MCF 10A (cell line): ENCODE measurements at regions of chr19 and their contacts with region 1.

Region 1: GRCh38 chr19:51784922-51785690 is 9.9 kb upstream of the FPR3 start:
- DNase-seq: peak; percentile 90
- H3K4me3 Mint-ChIP-seq: no peak overlapping the region
- H3K27ac Mint-ChIP-seq: no peak overlapping the region
- H3K4me1 Mint-ChIP-seq: peaks cover 5% of the 10 kb centered on the region
- H3K27me3 Mint-ChIP-seq: no peaks in the 10 kb centered on the region
- CTCF ChIP-seq: no peak

Region 2: GRCh38 chr19:51338563-51339312 is 446.4 kb before region 1 on chr19:
- CTCF ChIA-PET with region 1: interaction called, 3 read pairs
- POLR2A ChIA-PET with region 1: no interaction called
- intact Hi-C with region 1: loop called (anchors 1 kb)
- DNase-seq: peak; percentile 83
- H3K4me3 Mint-ChIP-seq: peak overlapping the region; percentile 76
- H3K27ac Mint-ChIP-seq: peak overlapping the region; percentile 33
- H3K4me1 Mint-ChIP-seq: peaks cover 11% of the 10 kb centered on the region
- H3K27me3 Mint-ChIP-seq: no peaks in the 10 kb centered on the region
- CTCF ChIP-seq: peak; percentile 86

Region 3: DNA sequence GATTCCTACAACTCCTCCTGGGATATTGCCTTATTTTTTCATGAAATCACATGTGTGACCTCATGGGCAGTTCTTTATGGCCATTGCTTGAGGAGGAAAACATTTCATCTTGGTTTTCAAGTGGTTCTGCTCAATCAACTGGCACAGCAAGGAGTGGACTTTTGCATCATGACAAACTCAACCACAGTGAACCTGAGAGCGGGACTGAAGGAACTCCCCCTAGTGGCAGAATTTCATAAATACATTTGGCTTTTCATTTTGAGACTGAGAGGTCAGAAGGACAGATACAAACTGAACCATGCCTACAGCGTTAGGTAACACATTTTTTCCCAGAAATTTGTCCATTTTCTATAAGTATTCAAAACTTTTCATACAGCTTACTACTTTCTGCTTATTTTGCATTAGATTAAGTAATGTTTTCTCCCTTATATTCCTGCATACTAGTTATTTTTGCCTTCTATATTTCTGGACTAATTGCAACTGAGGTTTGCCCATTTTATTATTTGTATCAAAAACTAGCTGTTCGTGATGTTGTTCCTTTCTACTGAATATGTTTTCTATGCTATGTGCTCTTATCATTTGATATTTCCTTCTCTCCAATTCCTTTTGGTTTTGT is 270.1 kb before region 1 on chr19:
- CTCF ChIA-PET with region 1: no interaction called
- POLR2A ChIA-PET with region 1: no interaction called
- intact Hi-C with region 1: loop called (anchors 5 kb)
- DNase-seq: peak; percentile 56
- H3K4me3 Mint-ChIP-seq: no peak overlapping the region
- H3K27ac Mint-ChIP-seq: no peak overlapping the region
- H3K4me1 Mint-ChIP-seq: no peaks in the 10 kb centered on the region
- H3K27me3 Mint-ChIP-seq: no peaks in the 10 kb centered on the region
- CTCF ChIP-seq: peak; percentile 70

Region 4: DNA sequence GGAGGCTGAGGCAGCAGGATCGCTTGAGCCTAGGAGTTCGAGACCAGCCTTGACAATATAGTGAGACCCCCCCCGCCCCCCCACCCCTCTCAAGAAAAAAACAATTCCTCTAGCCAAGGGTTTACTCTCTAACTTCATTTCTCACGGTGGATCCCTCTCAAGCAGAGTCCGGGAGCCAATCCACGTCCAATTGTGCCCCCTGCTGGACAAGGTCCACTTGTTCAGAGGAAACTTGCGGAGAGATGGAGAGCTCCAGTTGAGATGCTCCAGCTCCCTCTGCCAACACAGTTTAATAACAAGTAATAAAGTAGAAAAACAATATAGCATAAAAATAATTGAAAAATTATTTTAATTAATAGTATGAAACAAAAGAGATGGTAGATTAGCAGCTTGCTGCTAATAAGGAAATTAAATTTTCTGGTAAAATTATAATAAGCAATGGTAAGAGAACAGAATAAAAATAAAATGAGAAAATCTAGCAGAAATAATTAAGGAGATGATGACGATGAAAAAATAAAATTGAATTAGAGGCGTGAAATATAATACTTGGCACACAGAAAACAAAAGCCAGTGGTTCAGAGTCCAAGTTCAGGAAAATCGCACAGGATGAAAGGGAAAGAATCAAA is 124.0 kb before region 1 on chr19:
- CTCF ChIA-PET with region 1: interaction called, 4 read pairs
- POLR2A ChIA-PET with region 1: no interaction called
- intact Hi-C with region 1: loop called (anchors 2 kb)
- DNase-seq: peak; percentile 90
- H3K4me3 Mint-ChIP-seq: no peak overlapping the region
- H3K27ac Mint-ChIP-seq: no peak overlapping the region
- H3K4me1 Mint-ChIP-seq: peaks cover 7% of the 10 kb centered on the region
- H3K27me3 Mint-ChIP-seq: peaks cover 30% of the 10 kb centered on the region
- CTCF ChIP-seq: peak; percentile 66

Region 5: GRCh38 chr19:51807111-51807701 is 22.1 kb after region 1 on chr19:
- CTCF ChIA-PET with region 1: interaction called, 18 read pairs
- POLR2A ChIA-PET with region 1: interaction called, 4 read pairs
- intact Hi-C with region 1: loop called (anchors 1 kb)
- DNase-seq: no peak
- H3K4me3 Mint-ChIP-seq: no peak overlapping the region
- H3K27ac Mint-ChIP-seq: no peak overlapping the region
- H3K4me1 Mint-ChIP-seq: peaks cover 29% of the 10 kb centered on the region
- H3K27me3 Mint-ChIP-seq: no peaks in the 10 kb centered on the region
- CTCF ChIP-seq: no peak

Region 6: GRCh38 chr19:52007806-52008557 is 222.9 kb after region 1 on chr19 and contains the start of gene ZNF615:
- CTCF ChIA-PET with region 1: no interaction called
- POLR2A ChIA-PET with region 1: no interaction called
- intact Hi-C with region 1: no loop called
- DNase-seq: peak; percentile 88
- H3K4me3 Mint-ChIP-seq: peak within 1 kb of the TSS; percentile 99
- H3K27ac Mint-ChIP-seq: peak within 1 kb of the TSS; percentile 98
- H3K4me1 Mint-ChIP-seq: peaks cover 8% of the 10 kb centered on the region
- H3K27me3 Mint-ChIP-seq: no peaks in the 10 kb centered on the region
- CTCF ChIP-seq: no peak
- total RNA-seq, gene ZNF615: 7.3 and 9.0 TPM in 2 replicates